AG04450 (cell line): ENCODE measurements at regions of chr6 and their contacts with region 1.

Region 1: GRCh38 chr6:31087494-31088089 is 24.8 kb downstream of the C6orf15 start:
- DNase-seq: peak; percentile 64
- H3K4me3 ChIP-seq: no peak overlapping the region
- H3K27ac ChIP-seq: no peak overlapping the region
- H3K27me3 ChIP-seq: no peaks in the 10 kb centered on the region
- CTCF ChIP-seq: peak; percentile 76

Region 2: GRCh38 chr6:30150671-30151395 is 936.8 kb before region 1 on chr6:
- CTCF ChIA-PET with region 1: no interaction called
- POLR2A ChIA-PET with region 1: no interaction called
- DNase-seq: no peak
- H3K4me3 ChIP-seq: no peak overlapping the region
- H3K27ac ChIP-seq: no peak overlapping the region
- H3K27me3 ChIP-seq: peaks cover 11% of the 10 kb centered on the region
- CTCF ChIP-seq: no peak

Region 3: GRCh38 chr6:30678964-30679726 is 408.4 kb before region 1 on chr6:
- CTCF ChIA-PET with region 1: interaction called, 11 read pairs
- POLR2A ChIA-PET with region 1: no interaction called
- DNase-seq: no peak
- H3K4me3 ChIP-seq: peak overlapping the region; percentile 45
- H3K27ac ChIP-seq: peak overlapping the region; percentile 39
- H3K27me3 ChIP-seq: no peaks in the 10 kb centered on the region
- CTCF ChIP-seq: peak; percentile 95

Region 4: DNA sequence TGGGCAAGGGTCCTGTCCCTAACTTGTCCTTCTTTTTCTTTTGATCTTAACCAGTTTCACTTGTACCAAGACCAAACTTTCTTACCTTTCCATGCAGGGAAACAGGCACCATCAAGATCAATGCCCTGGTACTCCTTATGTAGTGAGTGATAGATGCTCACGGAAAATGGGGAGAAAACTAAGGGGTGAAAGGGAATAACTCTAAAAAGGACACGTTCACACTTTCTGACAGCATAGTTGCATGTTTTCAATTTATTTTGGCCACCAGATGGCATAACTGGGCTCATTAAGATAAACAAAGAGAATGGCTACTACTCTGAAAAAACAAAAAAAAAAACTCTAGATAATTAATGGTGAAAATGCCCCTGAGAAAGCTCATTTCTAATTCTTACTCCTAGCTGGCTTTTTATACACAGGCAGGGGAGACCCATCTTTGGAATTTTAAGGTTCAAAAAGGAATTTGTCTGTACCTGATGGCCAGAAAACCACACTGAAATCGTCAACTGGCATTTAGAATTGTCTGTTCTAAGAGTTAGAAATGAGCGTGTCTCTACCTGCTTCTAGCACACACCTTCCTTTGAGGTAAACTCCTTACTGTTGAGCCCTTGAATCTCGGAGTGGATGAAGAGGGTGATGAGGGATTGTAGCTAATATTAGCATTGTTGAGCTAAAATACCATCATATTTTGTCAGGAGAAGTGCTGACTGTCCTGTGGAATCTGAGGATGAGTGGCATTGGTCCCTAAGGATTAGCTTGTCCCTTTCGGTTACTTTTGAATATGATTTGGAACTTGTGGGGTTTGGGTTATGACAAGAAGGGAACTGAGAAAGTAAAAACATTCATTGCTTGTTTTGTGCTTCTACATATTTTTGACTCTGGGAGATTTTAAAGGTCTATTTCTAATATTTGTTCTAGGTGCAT is 265.5 kb before region 1 on chr6:
- CTCF ChIA-PET with region 1: interaction called, 93 read pairs
- POLR2A ChIA-PET with region 1: no interaction called
- DNase-seq: no peak
- H3K4me3 ChIP-seq: no peak overlapping the region
- H3K27ac ChIP-seq: peak overlapping the region; percentile 21
- H3K27me3 ChIP-seq: no peaks in the 10 kb centered on the region
- CTCF ChIP-seq: peak; percentile 58

Region 5: GRCh38 chr6:30836431-30836866 is 251.1 kb before region 1 on chr6:
- CTCF ChIA-PET with region 1: interaction called, 16 read pairs
- POLR2A ChIA-PET with region 1: no interaction called
- DNase-seq: no peak
- H3K4me3 ChIP-seq: no peak overlapping the region
- H3K27ac ChIP-seq: no peak overlapping the region
- H3K27me3 ChIP-seq: no peaks in the 10 kb centered on the region
- CTCF ChIP-seq: no peak

Region 6: DNA sequence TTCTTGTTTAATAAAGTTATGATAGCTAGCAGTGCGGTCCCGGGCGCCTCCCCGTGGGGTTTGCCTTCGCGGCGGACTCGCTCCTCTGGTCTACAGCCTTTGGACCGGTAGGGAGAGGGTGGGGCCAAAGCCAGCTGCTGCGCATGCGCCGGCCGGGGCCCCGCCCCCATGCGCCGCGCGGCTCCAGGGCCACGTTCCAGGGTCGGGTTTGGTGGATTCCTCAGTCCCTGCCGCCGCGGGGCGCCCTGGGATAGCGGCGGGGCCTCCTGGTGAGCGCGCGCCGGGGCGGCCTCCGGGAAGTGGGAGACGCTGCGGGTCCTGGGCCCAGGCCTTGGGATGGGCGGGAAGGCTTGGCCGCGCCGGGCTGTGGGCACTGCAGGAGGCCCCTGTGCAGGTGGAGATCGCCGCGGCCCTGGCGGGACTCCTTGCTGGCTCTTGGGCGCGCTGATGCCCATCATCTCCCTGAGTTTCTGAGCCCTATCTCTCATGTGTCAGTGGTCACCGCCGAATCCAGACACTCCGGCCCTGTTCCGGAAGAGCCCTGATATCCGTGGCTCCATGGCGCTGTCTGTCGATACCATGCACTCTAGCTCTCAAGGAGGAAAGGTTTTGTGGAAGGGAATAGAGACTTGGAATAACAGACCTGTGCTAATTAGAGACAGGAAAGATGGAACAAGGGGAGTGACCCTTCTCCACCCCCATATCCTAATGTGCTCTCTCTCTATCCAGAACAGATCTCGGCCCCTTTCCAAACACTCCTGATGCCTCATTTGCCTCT is 173.3 kb before region 1 on chr6 and contains the start of gene VARS2:
- CTCF ChIA-PET with region 1: interaction called, 183 read pairs
- POLR2A ChIA-PET with region 1: interaction called, 6 read pairs
- DNase-seq: peak; percentile 71
- H3K4me3 ChIP-seq: peak within 1 kb of the TSS; percentile 63
- H3K27ac ChIP-seq: peak within 1 kb of the TSS; percentile 68
- H3K27me3 ChIP-seq: no peaks in the 10 kb centered on the region
- CTCF ChIP-seq: peak; percentile 40
- polyA plus RNA-seq, gene VARS2: 10.3 and 12.2 TPM in 2 replicates

Region 7: GRCh38 chr6:31068669-31069340 is 18.8 kb before region 1 on chr6:
- CTCF ChIA-PET with region 1: interaction called, 135 read pairs
- POLR2A ChIA-PET with region 1: no interaction called
- DNase-seq: peak; percentile 52
- H3K4me3 ChIP-seq: no peak overlapping the region
- H3K27ac ChIP-seq: no peak overlapping the region
- H3K27me3 ChIP-seq: peaks cover 4% of the 10 kb centered on the region
- CTCF ChIP-seq: peak; percentile 96

Region 8: GRCh38 chr6:31128093-31128676 is 40.6 kb after region 1 on chr6:
- CTCF ChIA-PET with region 1: interaction called, 10 read pairs
- POLR2A ChIA-PET with region 1: no interaction called
- DNase-seq: no peak
- H3K4me3 ChIP-seq: no peak overlapping the region
- H3K27ac ChIP-seq: no peak overlapping the region
- H3K27me3 ChIP-seq: peaks cover 13% of the 10 kb centered on the region
- CTCF ChIP-seq: peak; percentile 88

Region 9: GRCh38 chr6:31386977-31387376 is 299.4 kb after region 1 on chr6:
- CTCF ChIA-PET with region 1: no interaction called
- POLR2A ChIA-PET with region 1: no interaction called
- DNase-seq: no peak
- H3K4me3 ChIP-seq: no peak overlapping the region
- H3K27ac ChIP-seq: no peak overlapping the region
- H3K27me3 ChIP-seq: peaks cover 10% of the 10 kb centered on the region
- CTCF ChIP-seq: no peak

Region 10: GRCh38 chr6:31769684-31770371 is 682.2 kb after region 1 on chr6:
- CTCF ChIA-PET with region 1: no interaction called
- POLR2A ChIA-PET with region 1: no interaction called
- DNase-seq: no peak
- H3K4me3 ChIP-seq: no peak overlapping the region
- H3K27ac ChIP-seq: no peak overlapping the region
- H3K27me3 ChIP-seq: no peaks in the 10 kb centered on the region
- CTCF ChIP-seq: peak; percentile 69